Activated B cell treated with CpG ODN at 0.5 μM for 24 hours (primary cell): ENCODE measurements at regions of chr1 and their contacts with region 1.

Region 1: GRCh38 chr1:31010086-31010989 is 55.2 kb downstream of the PUM1 start:
- DNase-seq: no peak
- ATAC-seq: peak; percentile 43
- H3K4me3 Mint-ChIP-seq: no peak overlapping the region
- H3K27ac Mint-ChIP-seq: peak overlapping the region; percentile 32
- H3K4me1 Mint-ChIP-seq: peaks cover 71% of the 10 kb centered on the region
- H3K27me3 Mint-ChIP-seq: no peaks in the 10 kb centered on the region
- CTCF ChIP-seq: no peak

Region 2: GRCh38 chr1:30991862-30992606 is 18.3 kb before region 1 on chr1:
- CTCF ChIA-PET with region 1: no interaction called
- POLR2A ChIA-PET with region 1: interaction called, 11 read pairs
- intact Hi-C with region 1: loop called (anchors 2 kb)
- DNase-seq: no peak
- ATAC-seq: no peak
- H3K4me3 Mint-ChIP-seq: no peak overlapping the region
- H3K27ac Mint-ChIP-seq: no peak overlapping the region
- H3K4me1 Mint-ChIP-seq: peaks cover 36% of the 10 kb centered on the region
- H3K27me3 Mint-ChIP-seq: no peaks in the 10 kb centered on the region
- CTCF ChIP-seq: no peak

Region 3: DNA sequence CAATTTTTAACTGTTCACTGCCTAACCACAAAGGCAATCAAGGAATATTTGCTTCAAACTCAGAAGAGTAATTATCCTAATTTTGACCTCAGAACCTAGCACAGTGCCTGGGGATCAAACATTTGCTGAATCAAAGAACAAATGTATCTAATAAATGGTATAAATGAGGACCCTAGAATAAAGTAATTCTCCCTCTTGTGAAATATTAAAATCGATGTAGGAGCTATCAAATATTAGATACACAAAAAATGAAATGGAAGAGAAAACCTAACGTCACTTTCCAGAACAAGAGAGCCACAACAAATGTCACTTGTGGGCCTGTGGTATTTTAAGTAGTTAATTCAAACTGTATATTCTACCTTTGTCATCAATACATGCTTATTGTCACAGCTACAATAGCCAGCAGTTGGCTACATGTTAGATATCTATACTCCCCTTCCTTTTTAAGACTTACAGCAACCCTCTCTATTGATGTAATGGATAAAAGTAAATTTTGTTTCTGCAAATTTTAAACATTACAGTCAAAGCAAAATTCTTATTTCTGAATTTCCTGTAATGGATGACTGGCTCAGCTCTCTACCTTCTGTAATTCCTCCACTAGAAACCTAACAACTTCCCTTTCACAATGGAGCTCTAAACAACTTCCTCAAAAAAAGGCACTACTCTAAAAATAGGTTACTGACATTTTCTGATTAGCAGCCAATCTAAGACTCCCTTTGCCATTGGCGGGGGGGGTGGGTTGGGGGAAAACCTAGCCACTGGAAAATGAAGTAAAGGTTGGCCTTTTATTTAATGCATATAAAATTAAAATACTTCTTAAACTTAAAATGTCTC is 17.6 kb after region 1 on chr1:
- CTCF ChIA-PET with region 1: no interaction called
- POLR2A ChIA-PET with region 1: no interaction called
- intact Hi-C with region 1: loop called (anchors 2 kb)
- DNase-seq: no peak
- ATAC-seq: peak; percentile 70
- H3K4me3 Mint-ChIP-seq: peak overlapping the region; percentile 45
- H3K27ac Mint-ChIP-seq: peak overlapping the region; percentile 13
- H3K4me1 Mint-ChIP-seq: peaks cover 74% of the 10 kb centered on the region
- H3K27me3 Mint-ChIP-seq: no peaks in the 10 kb centered on the region
- CTCF ChIP-seq: no peak